Gastrocnemius medialis (tissue), 4 donors: ENCODE measurements at regions of chr17 and their contacts with region 1.

Region 1: DNA sequence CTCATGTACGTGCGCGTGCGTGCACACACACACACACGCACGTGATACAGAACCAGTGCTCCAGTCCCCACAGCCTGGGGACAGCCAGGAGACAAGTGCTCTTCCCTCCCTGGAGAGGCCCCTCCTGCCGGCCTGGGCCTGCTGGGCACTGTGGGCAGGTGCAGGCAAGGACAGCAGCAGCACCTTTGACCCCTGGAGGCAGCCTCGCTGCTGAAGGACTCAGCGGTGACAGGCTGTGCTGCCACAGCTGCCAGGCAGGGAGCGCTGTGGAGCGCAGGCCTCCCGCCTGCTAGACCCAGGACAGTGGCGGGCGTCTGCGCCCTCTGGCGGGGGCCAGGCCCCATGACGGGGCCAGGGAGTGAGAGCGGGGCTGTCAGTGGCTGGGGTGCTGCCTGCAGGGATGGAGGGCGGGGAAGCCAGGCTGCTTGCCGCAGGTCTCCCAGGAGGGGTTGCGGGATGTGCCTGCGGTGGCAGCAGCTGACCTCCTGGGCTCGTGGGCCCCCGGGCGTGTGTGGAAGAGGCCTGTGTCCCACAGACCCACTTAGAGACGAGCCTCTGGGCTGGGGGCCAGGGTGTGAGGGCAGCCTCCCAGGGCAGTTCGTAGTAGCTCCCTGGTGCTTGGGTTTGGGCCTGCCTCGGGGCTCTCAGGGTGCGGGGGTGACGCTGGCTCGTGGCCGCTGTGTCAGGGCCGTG is 63.5 kb upstream of the PVALEF start:
- DNase-seq: peak; percentile 51 to 76
- ATAC-seq: peak; percentile 61 to 79
- H3K4me3 ChIP-seq: no peak overlapping the region
- H3K27ac ChIP-seq: no peak overlapping the region
- H3K4me1 ChIP-seq: peaks cover 5 to 10% of the 10 kb centered on the region in 2 donors
- H3K27me3 ChIP-seq: no peaks in the 10 kb centered on the region
- CTCF ChIP-seq: peak; percentile 99 to 100 (median 100)
- POLR2A ChIP-seq: no peak

Region 2: DNA sequence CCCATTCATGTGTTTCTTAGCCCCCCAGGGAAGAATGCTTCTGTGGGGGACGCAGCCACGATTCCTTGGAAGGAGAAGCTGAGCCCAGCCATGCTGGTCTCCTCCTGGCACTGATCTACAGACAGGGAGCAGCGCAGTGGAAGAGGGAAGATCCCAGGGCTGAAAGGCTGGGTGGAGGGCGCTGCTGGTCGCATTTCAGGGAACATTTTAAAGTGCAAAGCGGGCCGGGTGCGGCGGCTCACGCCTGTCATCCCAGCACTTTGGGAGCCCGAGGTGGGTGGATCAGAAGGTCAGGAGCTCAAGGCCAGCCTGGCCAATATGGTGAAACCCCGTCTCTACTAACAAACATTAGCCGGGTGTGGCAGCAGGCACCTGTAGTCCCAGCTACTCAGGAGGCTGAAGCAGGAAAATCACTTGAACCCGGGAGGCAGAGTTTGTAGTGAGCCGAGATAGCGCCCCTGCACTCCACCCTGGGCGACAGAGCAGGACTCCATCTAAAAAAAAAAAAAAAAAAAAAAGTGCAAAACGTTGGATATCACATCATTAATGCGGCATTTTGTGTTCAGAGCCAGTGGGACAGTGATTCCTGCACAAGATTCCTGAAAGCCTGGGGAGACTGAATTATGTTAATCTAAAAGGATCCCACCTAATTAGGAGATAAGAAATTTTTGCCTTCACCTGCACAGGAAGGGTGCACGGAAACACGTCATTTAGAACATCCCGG is 110.7 kb before region 1 on chr17:
- in situ Hi-C with region 1: no loop called
- intact Hi-C with region 1: loop called (anchors 1 kb)
- DNase-seq: no peak
- ATAC-seq: peak in 1 of 2 donors; percentile 3
- H3K4me3 ChIP-seq: peak overlapping the region; percentile 70 to 83 (median 77)
- H3K27ac ChIP-seq: peak overlapping the region; percentile 68 to 85 (median 73)
- H3K4me1 ChIP-seq: peaks cover 24 to 40% of the 10 kb centered on the region in 2 donors
- H3K27me3 ChIP-seq: no peaks in the 10 kb centered on the region
- CTCF ChIP-seq: no peak
- POLR2A ChIP-seq: no peak

Region 3: DNA sequence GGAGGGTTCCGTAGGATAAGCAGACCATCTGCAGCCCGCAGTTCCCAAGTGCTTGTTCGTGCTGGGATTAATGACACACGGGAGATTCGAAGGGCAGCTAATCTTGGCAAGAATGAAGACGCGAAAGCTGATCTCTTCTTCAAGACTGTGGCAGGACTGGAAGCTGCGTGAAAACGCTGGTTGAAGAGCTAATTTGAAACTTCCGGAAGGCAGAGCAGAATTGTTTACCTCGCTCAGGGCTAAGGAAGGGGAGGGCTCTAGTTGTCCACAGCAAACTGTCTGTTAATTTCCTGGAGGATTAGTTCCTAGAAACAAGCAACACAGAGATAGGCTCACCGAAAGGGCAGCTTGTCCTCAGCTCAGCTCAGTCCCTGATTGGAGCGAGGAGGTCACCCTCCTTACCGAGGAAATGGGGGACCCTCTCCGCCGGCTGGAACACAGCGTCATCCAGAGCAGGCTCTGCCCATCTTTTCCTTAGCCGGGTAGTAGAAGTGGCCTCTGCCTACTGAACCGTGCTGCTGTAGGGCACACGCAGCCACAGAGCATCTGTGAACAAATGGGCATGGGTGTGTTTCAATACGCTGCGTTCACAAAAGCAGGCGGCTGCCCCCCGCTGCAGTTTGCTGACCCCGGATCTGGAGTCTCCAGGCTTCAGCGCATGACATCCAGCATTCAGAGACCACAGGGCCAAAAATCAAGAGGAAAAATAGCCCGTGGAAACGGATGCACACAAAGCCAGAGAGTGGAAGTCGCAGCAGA is 83.5 kb before region 1 on chr17:
- in situ Hi-C with region 1: loop called in 2 of 4 experiments (anchors 5 to 10 kb)
- intact Hi-C with region 1: loop called (anchors 1 kb)
- DNase-seq: no peak
- ATAC-seq: peak; percentile 45 to 55
- H3K4me3 ChIP-seq: peak overlapping the region; percentile 29 to 43 (median 34)
- H3K27ac ChIP-seq: peak overlapping the region; percentile 64 to 79 (median 70)
- H3K4me1 ChIP-seq: peaks cover 45 to 46% of the 10 kb centered on the region in 2 donors
- H3K27me3 ChIP-seq: no peaks in the 10 kb centered on the region
- CTCF ChIP-seq: no peak
- POLR2A ChIP-seq: peak in 1 of 2 donors; percentile 18

Region 4: DNA sequence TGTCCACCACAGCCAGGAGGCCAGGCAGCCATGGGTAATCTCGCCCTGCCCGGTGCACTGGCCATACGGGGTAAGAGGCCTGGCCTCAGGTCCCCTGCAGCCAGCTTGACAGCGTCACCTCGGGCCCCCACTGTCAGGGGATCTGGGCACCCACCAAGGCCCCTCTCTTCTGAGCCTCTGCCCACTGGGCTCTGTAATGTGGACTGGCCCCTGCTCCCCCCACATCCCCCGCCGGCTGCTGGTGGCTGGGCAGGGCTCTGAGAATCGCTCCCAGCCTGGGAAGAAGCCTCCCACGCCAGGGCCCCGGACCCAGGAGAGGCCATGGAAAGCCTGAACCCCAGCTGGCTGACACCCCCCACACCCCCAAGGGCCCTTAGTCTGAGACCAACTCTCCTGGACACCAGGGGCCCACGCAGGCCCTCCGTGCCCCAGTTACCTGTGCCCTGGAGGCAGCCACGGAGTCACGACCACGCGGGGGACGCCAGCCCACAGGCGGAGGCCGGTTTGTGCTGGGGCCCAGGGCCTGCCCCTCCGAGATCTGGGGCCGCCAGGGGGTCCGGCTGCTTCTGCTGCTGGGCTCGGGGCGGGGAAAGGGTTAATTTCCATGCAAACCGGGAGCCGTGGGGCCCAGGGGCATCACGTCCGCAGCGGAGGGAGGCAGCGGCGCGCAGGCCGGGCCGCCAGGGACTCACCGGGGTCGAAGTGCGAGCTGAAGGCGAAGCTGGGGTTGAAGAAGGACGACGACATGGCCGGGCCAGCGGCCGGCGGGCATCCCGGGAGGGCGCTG is 63.7 kb after region 1 on chr17 and contains the start of gene PVALEF:
- in situ Hi-C with region 1: no loop called
- intact Hi-C with region 1: no loop called
- DNase-seq: no peak
- ATAC-seq: no peak
- H3K4me3 ChIP-seq: peak within 1 kb of the TSS; percentile 27 to 47 (median 36)
- H3K27ac ChIP-seq: no peak within 1 kb of the TSS
- H3K4me1 ChIP-seq: peaks cover 0 to 3% of the 10 kb centered on the region in 2 donors
- H3K27me3 ChIP-seq: peaks cover 17 to 29% (median 23%) of the 10 kb centered on the region in 3 donors
- CTCF ChIP-seq: no peak
- POLR2A ChIP-seq: no peak
- total RNA-seq, gene PVALEF: not detected